ENCODE measurements at regions of chr2 and their contacts with region 1.

Region 1: GRCh38 chr2:48589170-48589767 is 28.4 kb upstream of the GTF2A1L start:
- DNase-seq: no peak
- H3K4me3 ChIP-seq: no peak overlapping the region
- H3K27ac ChIP-seq: no peak overlapping the region
- H3K4me1 ChIP-seq: peaks cover 5 to 17% (median 12%) of the 10 kb centered on the region in 4 experiments; a peak in 4 of 7 replicates
- H3K27me3 ChIP-seq: peaks cover 0 to 4% (median 0%) of the 10 kb centered on the region in 4 experiments; a peak in 2 of 7 replicates
- CTCF ChIP-seq: peak; percentile 36 to 74 (median 61)
- EP300 ChIP-seq: no peak
- POLR2A ChIP-seq: no peak
- RAD21 ChIP-seq: peak; percentile 73 to 74

Region 2: GRCh38 chr2:48471048-48471474 is 118.2 kb before region 1 on chr2:
- CTCF ChIA-PET with region 1: interaction called, 16 read pairs
- POLR2A ChIA-PET with region 1: interaction called, 3 read pairs
- DNase-seq: no peak
- H3K4me3 ChIP-seq: no peak overlapping the region
- H3K27ac ChIP-seq: no peak overlapping the region
- H3K4me1 ChIP-seq: peaks cover 0 to 5% (median 0%) of the 10 kb centered on the region in 4 experiments; a peak in 3 of 7 replicates
- H3K27me3 ChIP-seq: no peaks in the 10 kb centered on the region
- CTCF ChIP-seq: peak in 2 of 3 experiments; percentile 42 to 76; a peak in 2 of 4 replicates
- EP300 ChIP-seq: no peak
- POLR2A ChIP-seq: no peak
- RAD21 ChIP-seq: peak; percentile 49 to 59

Region 3: GRCh38 chr2:48534781-48535180 is 54.5 kb before region 1 on chr2:
- CTCF ChIA-PET with region 1: interaction called, 16 read pairs
- POLR2A ChIA-PET with region 1: no interaction called
- DNase-seq: no peak
- H3K4me3 ChIP-seq: no peak overlapping the region
- H3K27ac ChIP-seq: no peak overlapping the region
- H3K4me1 ChIP-seq: peaks cover 0 to 13% (median 2%) of the 10 kb centered on the region in 4 experiments; a peak in 3 of 7 replicates
- H3K27me3 ChIP-seq: no peaks in the 10 kb centered on the region
- CTCF ChIP-seq: no peak
- EP300 ChIP-seq: no peak
- POLR2A ChIP-seq: no peak
- RAD21 ChIP-seq: no peak

Region 4: DNA sequence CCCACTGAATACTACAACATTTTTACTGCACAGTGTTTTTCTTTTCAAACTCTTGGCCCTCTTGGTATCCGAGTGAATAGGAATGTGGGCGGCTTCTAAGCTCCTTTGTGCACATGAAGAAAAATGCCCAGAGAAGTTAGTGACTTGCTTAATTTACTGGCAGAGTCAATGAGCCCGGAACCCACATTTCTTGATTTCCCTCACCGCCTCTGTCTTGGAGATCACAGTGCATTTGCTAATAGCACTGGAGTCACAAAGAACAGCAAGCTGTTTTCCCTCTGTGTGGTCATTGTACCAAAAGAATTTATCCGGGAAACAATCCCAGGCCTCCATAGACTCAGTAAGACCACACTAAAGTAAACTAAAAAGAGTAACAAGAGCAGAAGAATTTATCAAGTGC is 40.4 kb before region 1 on chr2:
- CTCF ChIA-PET with region 1: interaction called, 11 read pairs
- POLR2A ChIA-PET with region 1: no interaction called
- DNase-seq: no peak
- H3K4me3 ChIP-seq: no peak overlapping the region
- H3K27ac ChIP-seq: no peak overlapping the region
- H3K4me1 ChIP-seq: no peaks in the 10 kb centered on the region; a peak in 1 of 7 replicates
- H3K27me3 ChIP-seq: no peaks in the 10 kb centered on the region; a peak in 1 of 7 replicates
- CTCF ChIP-seq: no peak
- EP300 ChIP-seq: no peak
- POLR2A ChIP-seq: no peak
- RAD21 ChIP-seq: no peak

Region 5: DNA sequence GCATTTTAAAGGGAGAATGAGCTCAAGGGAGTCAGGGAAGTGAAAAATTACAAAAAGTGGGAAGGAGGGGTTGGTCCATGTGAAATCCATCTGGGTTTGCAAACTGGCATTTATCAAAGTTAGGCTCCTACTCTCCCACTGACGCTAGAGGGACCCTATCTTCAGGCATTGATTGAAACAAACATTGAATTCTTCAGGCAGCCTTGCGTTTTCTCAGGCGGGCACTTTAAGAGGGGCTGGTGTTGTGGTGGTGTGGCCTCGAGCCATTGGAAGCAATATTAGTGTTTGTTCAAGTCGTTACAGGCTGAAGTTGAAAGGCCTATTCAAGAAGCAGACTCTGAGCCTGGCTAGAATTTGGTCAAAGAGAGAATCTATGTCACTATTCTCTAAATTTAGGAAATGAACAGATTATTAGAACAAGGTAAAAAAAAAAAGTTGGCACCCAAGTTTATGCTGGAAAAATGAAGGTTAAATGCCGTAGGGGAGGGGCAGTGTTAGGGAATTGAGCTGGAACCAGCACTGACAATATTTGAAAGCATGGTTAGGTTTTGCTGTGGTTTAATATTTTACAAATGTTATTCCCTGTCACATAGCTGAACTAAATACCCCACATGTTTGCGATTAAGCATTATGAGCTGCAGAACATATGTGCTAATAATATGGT is 22.5 kb before region 1 on chr2:
- CTCF ChIA-PET with region 1: interaction called, 11 read pairs
- POLR2A ChIA-PET with region 1: no interaction called
- DNase-seq: no peak
- H3K4me3 ChIP-seq: no peak overlapping the region
- H3K27ac ChIP-seq: no peak overlapping the region
- H3K4me1 ChIP-seq: no peaks in the 10 kb centered on the region
- H3K27me3 ChIP-seq: no peaks in the 10 kb centered on the region
- CTCF ChIP-seq: peak in 2 of 3 experiments; percentile 52 to 61; a peak in 3 of 4 replicates
- EP300 ChIP-seq: no peak
- POLR2A ChIP-seq: no peak
- RAD21 ChIP-seq: peak; percentile 53 to 62

Region 6: DNA sequence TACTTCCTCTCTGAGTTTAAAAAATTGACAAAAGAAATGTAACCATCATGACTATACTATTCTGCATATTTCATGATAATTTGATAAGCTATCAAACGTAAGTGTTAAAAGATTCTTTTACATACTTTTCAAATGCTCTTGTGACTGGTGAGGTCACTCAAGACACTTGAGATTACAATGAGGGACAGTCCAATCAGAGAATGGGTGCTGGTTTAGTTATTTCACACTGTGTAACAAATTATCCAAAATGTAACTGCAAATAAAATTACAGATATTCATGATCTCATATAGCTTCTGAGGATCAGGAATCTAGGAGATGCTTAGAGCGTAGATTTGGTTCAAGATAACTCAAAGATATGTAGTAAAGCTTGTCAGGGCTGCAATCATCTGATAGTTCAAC is 23.9 kb after region 1 on chr2:
- CTCF ChIA-PET with region 1: no interaction called
- POLR2A ChIA-PET with region 1: no interaction called
- DNase-seq: no peak
- H3K4me3 ChIP-seq: no peak overlapping the region
- H3K27ac ChIP-seq: no peak overlapping the region
- H3K4me1 ChIP-seq: no peaks in the 10 kb centered on the region
- H3K27me3 ChIP-seq: no peaks in the 10 kb centered on the region
- CTCF ChIP-seq: no peak
- EP300 ChIP-seq: no peak
- POLR2A ChIP-seq: no peak
- RAD21 ChIP-seq: no peak

Measured in H1 (cell line).